ENCODE measurements at regions of chr14 and their contacts with region 1.

Region 1: GRCh38 chr14:49767562-49768300 is at the start of gene KLHDC2:
- DNase-seq: peak; percentile 81 to 92 (median 88)
- ATAC-seq: peak; percentile 79 to 82
- H3K4me3 Mint-ChIP-seq: peak within 1 kb of the TSS; percentile 91 to 98 (median 96)
- H3K27ac Mint-ChIP-seq: peak within 1 kb of the TSS; percentile 96 to 100 (median 99)
- H3K4me1 Mint-ChIP-seq: peaks cover 10 to 41% (median 39%) of the 10 kb centered on the region in 4 donors
- H3K27me3 Mint-ChIP-seq: no peaks in the 10 kb centered on the region
- polyA plus RNA-seq, gene KLHDC2: 72.5 to 77.4 (median 75.5) TPM

Region 2: GRCh38 chr14:49598485-49599300 is 169.0 kb before region 1 on chr14 and contains the start of gene LRR1:
- POLR2A ChIA-PET with region 1: interaction called, 18 read pairs
- DNase-seq: peak; percentile 72 to 96 (median 84)
- ATAC-seq: peak; percentile 77 to 82
- H3K4me3 Mint-ChIP-seq: peak within 1 kb of the TSS; percentile 94 to 99 (median 98)
- H3K27ac Mint-ChIP-seq: peak within 1 kb of the TSS; percentile 96 to 100 (median 98)
- H3K4me1 Mint-ChIP-seq: peaks cover 5 to 52% (median 31%) of the 10 kb centered on the region in 4 donors
- H3K27me3 Mint-ChIP-seq: no peaks in the 10 kb centered on the region
- polyA plus RNA-seq, gene LRR1: 8.5 to 10.4 (median 8.9) TPM

Region 3: DNA sequence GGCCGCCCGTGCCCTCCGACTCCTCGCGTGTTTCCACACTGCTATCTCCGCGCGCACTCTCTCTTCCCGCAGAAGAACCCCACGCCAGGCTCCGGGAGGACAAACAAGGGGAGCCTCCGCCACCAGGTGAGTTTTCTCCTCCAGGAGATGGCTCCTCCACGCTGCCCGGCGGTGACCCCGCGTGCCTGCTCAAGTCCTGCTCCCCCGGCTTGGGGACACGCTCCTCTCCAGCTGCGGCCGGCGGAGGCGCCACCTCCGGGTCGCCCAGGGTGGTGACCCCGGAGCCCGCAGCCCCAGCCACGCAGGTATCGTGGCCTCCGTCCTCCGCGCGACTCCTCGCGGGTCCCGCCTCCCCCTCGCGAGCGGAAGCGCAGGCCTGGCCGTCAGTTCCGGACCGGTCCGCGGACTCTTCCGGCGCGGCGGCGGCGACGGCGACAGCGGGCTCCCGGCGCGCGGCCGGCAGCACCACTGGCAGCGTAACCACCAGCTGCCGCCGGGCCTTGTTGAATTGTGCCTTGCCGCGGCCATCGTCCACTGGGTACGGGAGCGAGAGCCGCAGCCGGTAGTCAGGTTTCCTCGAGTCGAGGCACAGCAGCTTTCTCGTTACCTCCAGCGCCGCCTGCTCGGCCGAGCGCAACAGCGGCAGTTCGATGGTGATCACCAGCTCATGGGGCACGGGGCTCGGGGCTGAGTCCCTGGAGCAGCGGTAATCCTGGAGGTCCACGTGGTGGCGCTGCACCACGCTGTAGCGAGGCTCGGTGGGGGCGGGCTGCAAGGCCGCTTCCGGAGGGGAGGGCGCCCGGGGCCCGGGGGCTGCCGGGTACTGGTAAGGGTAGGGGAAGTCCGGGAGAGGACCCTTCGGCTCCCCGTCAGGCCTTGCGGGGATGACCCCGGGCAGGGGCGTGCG is 133.8 kb before region 1 on chr14:
- POLR2A ChIA-PET with region 1: interaction called, 90 read pairs
- DNase-seq: peak; percentile 90 to 97 (median 94)
- ATAC-seq: peak; percentile 78 to 82
- H3K4me3 Mint-ChIP-seq: peak overlapping the region; percentile 92 to 99 (median 96)
- H3K27ac Mint-ChIP-seq: peak overlapping the region; percentile 90 to 98 (median 93)
- H3K4me1 Mint-ChIP-seq: peaks cover 15 to 65% (median 56%) of the 10 kb centered on the region in 4 donors
- H3K27me3 Mint-ChIP-seq: no peaks in the 10 kb centered on the region

Region 4: DNA sequence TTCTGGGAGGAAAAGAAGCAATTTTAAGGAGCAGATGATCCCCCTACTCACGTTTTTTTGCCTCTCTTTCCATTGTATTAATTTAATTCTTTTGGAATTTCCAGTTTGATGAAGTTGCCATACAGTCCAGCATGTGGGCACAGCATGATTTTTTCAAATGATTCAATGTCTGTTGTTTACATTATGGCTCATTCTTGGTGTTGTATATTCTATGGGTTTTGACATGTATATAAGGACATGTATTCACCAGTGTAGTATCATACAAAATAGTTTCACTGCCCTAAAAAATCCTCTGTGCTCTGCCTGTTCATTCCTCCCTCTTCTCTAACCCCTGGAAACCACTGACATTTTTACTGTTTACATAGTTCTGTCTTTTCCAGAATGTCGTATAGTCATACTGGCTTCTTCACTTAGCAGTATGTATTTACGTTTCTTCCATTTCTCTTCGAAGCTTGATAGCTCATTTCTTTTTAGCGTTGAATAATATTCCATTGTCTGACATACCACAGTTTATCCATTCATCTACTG is 13.1 kb before region 1 on chr14:
- POLR2A ChIA-PET with region 1: no interaction called
- DNase-seq: no peak
- ATAC-seq: no peak
- H3K4me3 Mint-ChIP-seq: no peak overlapping the region
- H3K27ac Mint-ChIP-seq: peak overlapping the region in 1 of 10 donors; percentile 24
- H3K4me1 Mint-ChIP-seq: peaks cover 0 to 1% (median 0%) of the 10 kb centered on the region in 4 donors
- H3K27me3 Mint-ChIP-seq: no peaks in the 10 kb centered on the region

Region 5: DNA sequence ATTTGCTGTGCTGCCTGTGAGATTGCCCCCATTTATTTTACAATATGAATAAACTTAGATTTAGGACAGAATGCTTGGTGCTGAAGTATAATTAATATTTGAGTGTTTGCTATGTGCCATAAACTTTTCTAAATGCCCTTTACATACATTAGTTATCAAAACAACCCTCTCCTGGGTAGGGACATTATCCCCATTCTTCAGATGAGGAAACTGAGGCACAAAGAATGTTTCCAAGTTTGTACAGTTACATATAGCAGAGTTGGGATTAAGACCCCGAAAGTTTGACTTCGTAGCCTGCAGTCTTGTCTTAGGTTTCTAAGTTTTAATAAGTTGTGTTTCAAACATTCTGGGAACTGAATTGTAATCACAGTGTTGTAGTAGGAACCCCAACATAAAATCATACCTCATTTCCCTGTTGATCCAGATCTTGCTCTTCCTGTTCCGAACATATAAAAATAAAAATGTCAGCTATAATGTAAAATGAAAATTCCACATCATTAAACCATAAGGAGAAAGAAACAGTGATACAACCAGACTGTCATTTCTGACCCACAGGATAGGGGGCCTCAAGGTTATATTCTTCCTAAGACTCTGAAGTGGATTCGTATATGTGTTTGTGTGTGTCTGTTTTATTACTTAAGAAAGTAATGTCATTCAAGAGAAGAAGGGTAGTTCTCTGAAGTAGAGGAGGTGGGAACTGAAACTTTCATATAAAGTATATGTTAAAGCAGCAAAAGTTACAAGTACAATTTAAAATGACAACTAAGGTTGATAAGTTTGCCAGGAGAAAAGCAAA is 18.8 kb after region 1 on chr14:
- POLR2A ChIA-PET with region 1: interaction called, 11 read pairs
- DNase-seq: no peak
- ATAC-seq: no peak
- H3K4me3 Mint-ChIP-seq: no peak overlapping the region
- H3K27ac Mint-ChIP-seq: peak overlapping the region in 4 of 10 donors; percentile 42 to 91 (median 75)
- H3K4me1 Mint-ChIP-seq: peaks cover 0 to 5% (median 2%) of the 10 kb centered on the region in 4 donors
- H3K27me3 Mint-ChIP-seq: no peaks in the 10 kb centered on the region

Region 6: GRCh38 chr14:49808780-49809179 is 41.0 kb after region 1 on chr14:
- POLR2A ChIA-PET with region 1: no interaction called
- DNase-seq: no peak
- ATAC-seq: no peak
- H3K4me3 Mint-ChIP-seq: no peak overlapping the region
- H3K27ac Mint-ChIP-seq: peak overlapping the region in 5 of 10 donors; percentile 11 to 58 (median 40)
- H3K4me1 Mint-ChIP-seq: peaks cover 5 to 9% (median 6%) of the 10 kb centered on the region in 4 donors
- H3K27me3 Mint-ChIP-seq: no peaks in the 10 kb centered on the region

Region 7: GRCh38 chr14:50116181-50116956 is 348.6 kb after region 1 on chr14 and contains the start of gene VCPKMT:
- POLR2A ChIA-PET with region 1: interaction called, 17 read pairs
- DNase-seq: peak; percentile 90 to 98 (median 96)
- ATAC-seq: peak; percentile 95 to 96
- H3K4me3 Mint-ChIP-seq: peak within 1 kb of the TSS; percentile 91 to 99 (median 97)
- H3K27ac Mint-ChIP-seq: peak within 1 kb of the TSS; percentile 96 to 99 (median 99)
- H3K4me1 Mint-ChIP-seq: peaks cover 6 to 41% (median 24%) of the 10 kb centered on the region in 4 donors
- H3K27me3 Mint-ChIP-seq: no peaks in the 10 kb centered on the region
- polyA plus RNA-seq, gene VCPKMT: 8.8 to 10.4 (median 9.5) TPM